PC-9 (cell line): ENCODE measurements at regions of chr11 and their contacts with region 1.

Region 1: GRCh38 chr11:34585735-34586487 is 35.0 kb upstream of the EHF start:
- DNase-seq: peak in 1 of 2 experiments; percentile 64
- H3K4me3 ChIP-seq: no peak overlapping the region
- H3K27ac ChIP-seq: peak overlapping the region; percentile 4; the same call in 1 of the 2 replicates
- H3K4me1 ChIP-seq: peaks cover 35% of the 10 kb centered on the region
- H3K27me3 ChIP-seq: no peaks in the 10 kb centered on the region
- CTCF ChIP-seq: peak; percentile 94

Region 2: DNA sequence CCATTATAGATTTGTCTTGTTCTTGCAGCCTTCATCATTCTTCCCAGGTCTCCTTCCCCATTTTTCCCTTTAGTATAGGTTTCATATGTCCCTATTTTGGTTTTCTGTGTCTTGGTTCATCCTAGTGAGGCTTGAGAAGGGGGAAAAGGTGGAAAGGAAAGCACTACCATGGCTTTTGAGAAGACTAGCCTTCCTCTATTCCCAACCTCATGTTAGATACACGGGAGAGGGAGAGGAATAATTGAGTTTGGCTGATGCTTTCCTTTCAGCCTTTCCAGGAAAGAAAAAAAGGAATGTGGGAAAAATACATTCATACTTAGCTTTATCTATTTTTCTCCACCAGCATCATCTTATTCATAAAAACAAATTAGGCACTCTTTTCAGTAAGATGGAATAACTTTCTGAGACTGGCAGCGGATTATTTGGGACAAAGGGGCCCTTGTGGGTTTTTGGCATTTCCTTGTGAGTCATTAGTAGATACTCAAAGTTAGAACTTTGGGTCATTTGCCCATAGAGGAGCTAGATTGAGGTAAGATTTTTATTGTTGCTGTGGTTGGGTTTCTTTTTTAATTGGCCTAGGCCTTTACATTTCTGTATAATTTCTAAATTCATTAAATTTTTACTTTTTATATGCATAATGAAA is 510.6 kb before region 1 on chr11:
- CTCF ChIA-PET with region 1: no interaction called
- POLR2A ChIA-PET with region 1: no interaction called
- intact Hi-C with region 1: no loop called
- DNase-seq: peak; percentile 21 to 87
- H3K4me3 ChIP-seq: no peak overlapping the region
- H3K27ac ChIP-seq: peak overlapping the region; percentile 92
- H3K4me1 ChIP-seq: peaks cover 43% of the 10 kb centered on the region
- H3K27me3 ChIP-seq: no peaks in the 10 kb centered on the region
- CTCF ChIP-seq: no peak

Region 3: DNA sequence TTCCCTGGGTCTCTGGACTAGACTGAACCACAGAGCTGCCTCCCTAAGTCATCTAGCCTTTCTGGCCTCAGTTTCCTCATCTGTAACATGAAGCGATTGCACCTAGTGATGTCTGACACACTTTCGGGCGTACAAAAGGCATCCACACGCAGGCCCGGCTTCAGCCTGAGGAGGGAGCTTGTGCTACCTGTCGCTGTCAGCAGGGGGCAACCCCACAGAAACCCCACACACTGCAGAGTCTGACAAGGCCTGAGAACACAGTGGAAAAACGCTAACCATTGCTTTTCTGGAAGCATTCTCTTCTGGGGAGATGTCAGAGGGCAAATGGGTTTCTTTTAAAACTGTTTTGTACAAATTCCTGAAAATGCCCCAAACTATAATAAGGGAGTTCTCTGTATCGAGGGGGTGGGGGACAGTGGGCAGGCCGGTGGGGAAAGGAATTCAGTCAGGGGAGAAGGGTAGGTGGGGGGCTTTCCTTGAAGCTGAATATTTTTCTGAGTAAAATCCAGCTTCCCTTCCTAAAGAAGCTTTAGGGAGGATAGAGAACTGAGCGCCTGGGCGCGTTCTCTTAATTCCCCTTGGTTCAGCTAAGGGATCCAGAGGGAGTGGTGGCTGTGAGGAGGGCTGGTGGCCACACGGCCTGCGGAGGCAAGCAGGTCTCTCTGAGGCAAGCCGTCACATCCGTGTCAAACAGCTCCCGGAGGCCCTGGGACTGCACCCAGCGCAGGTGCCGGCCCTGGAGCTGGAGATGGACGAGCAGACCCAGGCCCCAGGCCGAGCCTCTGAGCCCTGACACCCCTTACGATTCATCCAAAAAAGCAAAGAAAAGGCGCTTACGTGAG is 72.8 kb before region 1 on chr11:
- CTCF ChIA-PET with region 1: interaction called, 4 read pairs
- POLR2A ChIA-PET with region 1: no interaction called
- intact Hi-C with region 1: loop called (anchors 5 kb)
- DNase-seq: peak; percentile 58 to 73
- H3K4me3 ChIP-seq: peak overlapping the region; percentile 56
- H3K27ac ChIP-seq: peak overlapping the region; percentile 61
- H3K4me1 ChIP-seq: peaks cover 20% of the 10 kb centered on the region
- H3K27me3 ChIP-seq: no peaks in the 10 kb centered on the region
- CTCF ChIP-seq: peak; percentile 97

Region 4: DNA sequence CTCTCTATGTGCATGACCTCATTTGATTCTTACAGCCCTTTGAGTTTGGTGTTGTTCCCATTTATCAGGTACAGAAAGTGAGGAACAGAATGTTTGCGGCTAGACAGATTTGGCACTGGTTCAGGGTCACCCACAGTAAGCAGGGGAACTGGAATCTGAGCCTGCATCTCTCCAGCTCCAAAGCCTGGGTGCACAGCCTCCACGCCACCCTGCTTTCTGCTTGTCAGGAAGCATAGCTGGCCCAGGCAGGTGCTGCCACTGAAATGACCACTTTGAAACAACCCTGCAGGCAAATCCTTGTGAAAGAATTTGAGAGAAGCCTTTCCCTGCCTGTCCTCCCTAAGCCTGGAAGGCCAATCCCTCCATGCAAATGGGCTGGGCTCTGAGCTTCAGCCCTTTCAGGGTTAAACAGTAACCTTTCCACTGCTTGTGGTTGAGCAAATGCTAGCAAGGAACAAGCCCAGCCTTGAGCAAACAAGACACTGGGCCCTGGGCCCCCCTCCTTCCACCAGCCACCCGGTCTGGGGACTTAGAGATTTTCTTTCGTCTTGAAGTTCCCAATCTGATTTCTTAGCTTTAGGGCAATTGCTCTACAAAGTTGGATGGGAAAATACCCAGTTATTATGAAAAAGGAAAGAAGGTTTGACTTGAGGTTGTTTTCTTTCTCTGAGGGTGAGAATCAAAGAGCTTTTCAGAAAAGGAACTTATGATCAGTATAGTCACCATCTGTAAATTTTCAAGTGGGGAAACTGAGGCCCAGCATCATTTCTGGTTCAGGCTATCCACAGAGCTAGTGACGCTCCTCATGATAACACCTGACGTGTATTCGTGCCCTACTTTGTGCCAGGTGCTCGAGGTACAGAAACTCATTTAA is 54.4 kb after region 1 on chr11:
- CTCF ChIA-PET with region 1: interaction called, 4 read pairs
- POLR2A ChIA-PET with region 1: interaction called, 50 read pairs
- intact Hi-C with region 1: loop called (anchors 2 kb)
- DNase-seq: peak; percentile 92 to 100
- H3K4me3 ChIP-seq: peak overlapping the region; percentile 38; the same call in 1 of the 2 replicates
- H3K27ac ChIP-seq: peak overlapping the region; percentile 84
- H3K4me1 ChIP-seq: peaks cover 98% of the 10 kb centered on the region
- H3K27me3 ChIP-seq: no peaks in the 10 kb centered on the region
- CTCF ChIP-seq: no peak

Region 5: GRCh38 chr11:34749666-34750659 is 164.1 kb after region 1 on chr11:
- CTCF ChIA-PET with region 1: no interaction called
- POLR2A ChIA-PET with region 1: no interaction called
- intact Hi-C with region 1: loop called (anchors 10 kb)
- DNase-seq: peak; percentile 80 to 87
- H3K4me3 ChIP-seq: no peak overlapping the region
- H3K27ac ChIP-seq: peak overlapping the region; percentile 8; the same call in 1 of the 2 replicates
- H3K4me1 ChIP-seq: peaks cover 24% of the 10 kb centered on the region
- H3K27me3 ChIP-seq: no peaks in the 10 kb centered on the region
- CTCF ChIP-seq: no peak